ENCODE measurements at regions of chr17 and their contacts with region 1.

Region 1: DNA sequence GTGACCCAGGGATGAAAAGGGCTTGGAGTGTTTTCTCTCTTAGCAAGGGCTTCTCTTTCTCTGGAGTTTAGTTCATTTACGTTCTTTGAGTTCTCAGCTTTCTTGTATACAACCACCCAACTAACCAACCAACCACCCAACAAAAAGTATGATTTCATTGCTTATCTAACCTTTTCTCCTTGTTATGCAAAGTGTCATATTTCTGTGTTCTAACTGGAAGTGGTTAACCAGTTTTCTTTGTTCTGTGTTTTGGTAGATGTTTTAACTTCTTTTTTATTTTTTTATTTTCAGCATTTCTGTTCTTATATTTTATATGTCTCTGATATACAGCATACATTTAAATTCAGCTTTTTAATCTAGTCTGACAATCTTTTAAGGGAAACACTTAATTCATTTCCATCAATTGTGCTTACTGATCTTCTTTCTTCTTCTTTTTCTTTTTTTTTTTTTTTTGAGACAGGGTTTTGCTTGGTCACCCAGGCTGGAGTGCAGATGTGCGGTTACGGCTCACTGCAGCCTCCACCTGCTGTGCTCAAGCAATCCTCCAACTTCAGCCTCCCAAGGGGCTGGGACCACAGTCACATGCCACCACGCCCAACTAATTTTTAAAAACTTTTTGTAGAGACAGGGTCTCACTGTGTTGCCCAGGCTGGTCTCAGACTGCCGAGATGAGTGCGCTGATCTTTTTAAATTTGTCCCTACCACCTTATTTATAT is 29.6 kb downstream of the NLK start:
- DNase-seq: no peak
- ATAC-seq: no peak
- H3K4me3 ChIP-seq: no peak overlapping the region
- H3K27ac ChIP-seq: no peak overlapping the region
- H3K4me1 ChIP-seq: 0 out of 2 replicates have a peak, but pooled peaks cover 5% of the 10 kb centered on the region
- H3K27me3 ChIP-seq: no peaks in the 10 kb centered on the region
- CTCF ChIP-seq: no peak

Region 2: GRCh38 chr17:27993723-27994310 is 78.2 kb before region 1 on chr17:
- CTCF ChIA-PET with region 1: no interaction called
- POLR2A ChIA-PET with region 1: no interaction called
- in situ Hi-C with region 1: no loop called
- intact Hi-C with region 1: loop called (anchors 10 kb)
- DNase-seq: no peak
- ATAC-seq: no peak
- H3K4me3 ChIP-seq: no peak overlapping the region
- H3K27ac ChIP-seq: no peak overlapping the region
- H3K4me1 ChIP-seq: no peaks in the 10 kb centered on the region
- H3K27me3 ChIP-seq: peaks cover 25% of the 10 kb centered on the region
- CTCF ChIP-seq: no peak

Region 3: GRCh38 chr17:28136923-28137322 is 64.9 kb after region 1 on chr17:
- CTCF ChIA-PET with region 1: no interaction called
- POLR2A ChIA-PET with region 1: interaction called, 13 read pairs
- in situ Hi-C with region 1: no loop called
- intact Hi-C with region 1: no loop called
- DNase-seq: no peak
- ATAC-seq: no peak
- H3K4me3 ChIP-seq: no peak overlapping the region
- H3K27ac ChIP-seq: no peak overlapping the region
- H3K4me1 ChIP-seq: no peaks in the 10 kb centered on the region
- H3K27me3 ChIP-seq: no peaks in the 10 kb centered on the region
- CTCF ChIP-seq: no peak

Region 4: GRCh38 chr17:28282596-28282995 is 210.5 kb after region 1 on chr17:
- CTCF ChIA-PET with region 1: no interaction called
- POLR2A ChIA-PET with region 1: no interaction called
- in situ Hi-C with region 1: no loop called
- intact Hi-C with region 1: no loop called
- DNase-seq: no peak
- ATAC-seq: no peak
- H3K4me3 ChIP-seq: no peak overlapping the region
- H3K27ac ChIP-seq: no peak overlapping the region
- H3K4me1 ChIP-seq: no peaks in the 10 kb centered on the region; the same call in 1 of the 2 replicates
- H3K27me3 ChIP-seq: no peaks in the 10 kb centered on the region
- CTCF ChIP-seq: no peak